HEK293T (cell line): ENCODE measurements at regions of chr3 and their contacts with region 1.

Region 1: GRCh38 chr3:48439820-48440589 is at the starts of genes CCDC51 and TMA7:
- DNase-seq: peak; percentile 97

Region 2: GRCh38 chr3:47877290-47877689 is 562.7 kb before region 1 on chr3:
- CTCF ChIA-PET with region 1: no interaction called
- POLR2A ChIA-PET with region 1: no interaction called
- DNase-seq: no peak

Region 3: GRCh38 chr3:48240711-48241491 is 199.1 kb before region 1 on chr3 and contains the start of gene ZNF589:
- CTCF ChIA-PET with region 1: interaction called, 14 read pairs
- POLR2A ChIA-PET with region 1: interaction called, 19 read pairs
- DNase-seq: peak; percentile 92

Region 4: DNA sequence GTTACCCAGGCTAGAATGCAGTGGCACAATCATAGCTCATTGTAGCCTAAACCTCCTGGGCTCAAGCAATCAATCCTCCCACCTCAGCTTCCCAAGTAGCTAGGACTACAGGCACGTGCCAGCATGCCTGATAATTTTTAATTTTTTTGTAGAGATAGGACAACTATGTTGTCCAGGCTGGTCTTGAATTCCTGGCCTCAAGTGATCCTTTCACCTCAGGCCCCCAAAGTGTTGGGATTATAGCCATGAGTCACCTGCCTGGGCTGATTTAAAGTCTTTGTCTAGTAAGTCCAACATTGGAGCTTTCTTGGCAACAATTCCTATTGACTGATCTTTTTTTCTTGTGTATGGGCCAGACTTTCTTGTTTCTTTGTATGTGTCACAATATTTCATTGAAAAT is 134.6 kb before region 1 on chr3:
- CTCF ChIA-PET with region 1: interaction called, 11 read pairs
- POLR2A ChIA-PET with region 1: no interaction called
- DNase-seq: no peak

Region 5: GRCh38 chr3:48408823-48409281 is 31.2 kb before region 1 on chr3:
- CTCF ChIA-PET with region 1: interaction called, 213 read pairs
- POLR2A ChIA-PET with region 1: interaction called, 8 read pairs
- DNase-seq: no peak

Region 6: GRCh38 chr3:48429317-48429959 is 10.6 kb before region 1 on chr3:
- CTCF ChIA-PET with region 1: interaction called, 11 read pairs
- POLR2A ChIA-PET with region 1: interaction called, 14 read pairs
- DNase-seq: peak; percentile 70

Region 7: DNA sequence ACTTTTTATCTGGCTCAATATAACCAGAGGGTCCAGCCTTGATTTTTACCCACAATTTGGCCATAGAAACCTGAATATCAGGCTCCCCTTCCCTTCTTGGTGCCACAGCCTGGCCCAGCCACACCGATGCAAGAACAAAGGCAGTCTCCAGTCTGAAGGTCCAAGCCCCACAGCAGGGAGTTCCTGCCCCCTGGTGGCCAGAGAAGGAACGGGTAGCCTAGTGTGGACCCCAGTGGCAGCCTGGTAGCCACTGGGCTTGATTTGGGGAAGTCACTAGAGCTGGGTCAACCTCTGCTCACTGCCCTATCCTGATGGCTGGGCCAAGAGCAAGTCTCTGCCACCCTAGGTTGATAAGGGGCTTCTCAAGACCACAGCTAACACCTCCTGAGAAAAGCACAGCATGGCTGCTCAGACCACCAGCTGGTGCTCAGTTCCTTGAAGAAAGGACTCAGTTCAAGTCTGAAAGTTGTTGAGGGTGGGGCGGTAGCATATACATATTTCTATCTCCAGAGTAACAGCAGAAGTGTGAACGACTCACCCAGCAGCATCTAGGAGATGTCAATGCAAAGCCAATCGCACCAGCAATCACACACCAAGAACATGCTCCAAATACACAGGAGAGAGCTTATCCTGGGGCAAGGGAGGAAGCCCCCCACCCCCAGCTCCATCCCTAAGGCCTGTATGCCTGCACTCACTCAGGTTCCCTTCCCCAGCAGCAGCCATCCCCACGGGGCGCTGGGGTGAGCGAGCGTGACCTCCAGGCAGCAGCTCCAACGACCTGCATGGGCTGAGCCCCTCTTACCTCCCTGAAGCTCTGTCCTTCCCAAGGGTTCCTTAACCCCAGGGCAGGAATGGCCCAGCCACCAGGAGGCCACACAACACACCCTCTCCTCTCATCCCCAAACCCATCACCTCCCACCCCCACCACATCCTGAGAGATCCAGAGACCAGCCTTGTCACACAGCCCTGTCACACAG is 109.0 kb after region 1 on chr3:
- CTCF ChIA-PET with region 1: interaction called, 15 read pairs
- POLR2A ChIA-PET with region 1: interaction called, 5 read pairs
- DNase-seq: peak; percentile 79

Region 8: DNA sequence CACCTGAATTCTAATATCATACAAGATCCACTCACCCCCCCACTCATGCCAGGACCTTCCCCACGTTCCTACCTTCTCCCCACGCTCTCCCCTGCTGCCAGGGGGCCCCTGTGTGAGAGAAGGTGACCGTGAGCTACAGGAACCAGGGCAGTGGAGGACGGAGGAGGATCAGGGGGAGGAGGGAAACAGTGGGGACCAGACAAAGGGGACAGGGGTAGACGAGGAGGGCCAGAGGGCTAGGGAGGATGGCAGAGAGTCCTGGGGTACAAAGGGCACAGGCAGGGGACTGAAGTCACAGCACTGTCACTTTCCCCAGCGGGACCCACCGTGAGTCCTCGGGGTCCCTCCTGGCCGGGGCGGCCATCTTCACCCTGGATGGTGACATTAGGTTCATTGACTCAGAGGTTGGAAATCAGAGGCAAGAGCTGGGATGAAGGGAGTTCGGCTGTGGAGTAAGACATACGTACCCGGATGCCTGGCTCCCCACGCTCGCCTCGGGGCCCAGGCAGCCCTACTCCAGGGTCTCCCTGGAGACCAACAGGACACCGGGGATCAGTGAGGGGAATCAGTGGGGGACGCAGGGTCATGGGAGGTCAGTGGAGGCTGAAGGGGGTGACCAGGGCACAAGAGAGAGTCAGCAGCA is 129.9 kb after region 1 on chr3:
- CTCF ChIA-PET with region 1: no interaction called
- POLR2A ChIA-PET with region 1: no interaction called
- DNase-seq: no peak

Region 9: DNA sequence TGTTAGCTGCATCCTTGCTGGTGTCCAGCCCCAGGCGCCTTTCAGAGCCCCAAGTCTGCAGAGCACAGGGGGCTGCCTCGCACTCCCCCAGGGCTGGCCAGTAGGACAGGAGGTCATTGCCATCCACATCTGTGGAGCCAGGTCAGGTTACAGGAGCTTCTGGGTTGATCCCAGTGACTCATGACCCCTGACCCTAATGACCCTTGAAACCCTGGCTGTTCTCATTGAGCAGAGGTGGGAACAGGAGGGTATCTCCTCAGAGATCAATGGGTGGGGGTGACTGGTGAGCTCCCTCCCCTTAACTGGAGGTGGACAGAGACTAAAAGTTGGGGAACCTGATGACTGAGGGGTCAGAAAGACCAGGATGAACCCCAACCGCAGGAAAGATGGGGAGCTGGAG is 201.4 kb after region 1 on chr3:
- CTCF ChIA-PET with region 1: no interaction called
- POLR2A ChIA-PET with region 1: no interaction called
- DNase-seq: no peak

Region 10: DNA sequence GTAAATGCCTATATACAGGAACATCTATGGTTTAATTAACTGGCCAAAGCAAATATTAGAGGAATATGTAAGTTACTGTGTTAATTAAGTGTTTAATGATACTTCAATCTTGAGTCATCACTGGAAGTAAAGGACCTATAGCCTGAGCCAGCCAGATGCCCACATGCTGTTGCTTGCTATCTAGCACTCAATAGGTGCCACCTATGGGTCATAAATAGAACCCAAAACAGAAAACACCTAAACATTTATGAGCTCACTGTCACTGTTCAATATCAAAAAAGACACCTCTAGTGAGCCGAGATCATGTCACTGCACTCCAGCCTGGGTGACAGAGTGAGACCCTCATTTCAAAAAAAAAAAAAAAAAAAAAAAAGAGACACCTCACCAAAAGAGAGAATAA is 325.4 kb after region 1 on chr3:
- CTCF ChIA-PET with region 1: no interaction called
- POLR2A ChIA-PET with region 1: no interaction called
- DNase-seq: no peak